ENCODE measurements at regions of chr21 and their contacts with region 1.

Region 1: GRCh38 chr21:45439161-45439872 is 34.4 kb downstream of the COL18A1 start:
- DNase-seq: peak; percentile 92
- ATAC-seq: peak; percentile 85

Region 2: GRCh38 chr21:45140346-45140940 is 298.9 kb before region 1 on chr21:
- intact Hi-C with region 1: loop called (anchors 5 kb)
- DNase-seq: no peak
- ATAC-seq: peak; percentile 89

Region 3: GRCh38 chr21:45292399-45293219 is 146.7 kb before region 1 on chr21:
- intact Hi-C with region 1: loop called (anchors 1 kb)
- DNase-seq: peak; percentile 92
- ATAC-seq: peak; percentile 76

Region 4: DNA sequence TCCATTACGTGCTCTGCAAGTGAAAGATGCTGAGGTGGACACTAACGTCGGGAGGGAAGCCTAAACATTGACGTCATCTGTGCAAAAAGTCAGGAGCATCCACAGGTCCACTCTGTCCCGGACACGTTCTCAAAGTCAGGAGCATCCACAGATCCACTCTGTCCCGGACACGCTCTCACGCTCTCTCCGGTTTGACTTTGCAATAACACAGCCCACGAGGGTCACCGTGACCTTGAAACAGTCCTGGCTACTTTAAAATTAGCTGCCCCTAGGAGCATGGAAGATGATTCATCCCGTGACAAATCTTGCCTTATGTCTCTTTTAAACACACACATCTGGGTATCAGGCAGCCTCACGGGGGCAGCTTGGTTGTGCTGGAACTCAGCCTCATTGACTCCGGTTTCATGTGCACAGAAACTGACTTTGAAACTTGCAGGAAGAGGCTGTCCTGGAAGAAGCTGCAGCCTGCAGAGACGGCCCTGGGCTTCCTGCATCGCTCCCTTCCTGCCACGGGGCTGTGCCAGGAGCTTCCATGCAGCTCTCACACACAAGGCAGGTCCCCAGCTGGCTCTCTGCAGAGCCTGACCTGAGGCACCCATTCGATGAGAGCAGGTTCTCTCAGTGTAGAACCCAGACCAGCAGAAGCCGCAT is 52.5 kb before region 1 on chr21:
- intact Hi-C with region 1: loop called (anchors 2 kb)
- DNase-seq: peak; percentile 75
- ATAC-seq: peak; percentile 51

Region 5: DNA sequence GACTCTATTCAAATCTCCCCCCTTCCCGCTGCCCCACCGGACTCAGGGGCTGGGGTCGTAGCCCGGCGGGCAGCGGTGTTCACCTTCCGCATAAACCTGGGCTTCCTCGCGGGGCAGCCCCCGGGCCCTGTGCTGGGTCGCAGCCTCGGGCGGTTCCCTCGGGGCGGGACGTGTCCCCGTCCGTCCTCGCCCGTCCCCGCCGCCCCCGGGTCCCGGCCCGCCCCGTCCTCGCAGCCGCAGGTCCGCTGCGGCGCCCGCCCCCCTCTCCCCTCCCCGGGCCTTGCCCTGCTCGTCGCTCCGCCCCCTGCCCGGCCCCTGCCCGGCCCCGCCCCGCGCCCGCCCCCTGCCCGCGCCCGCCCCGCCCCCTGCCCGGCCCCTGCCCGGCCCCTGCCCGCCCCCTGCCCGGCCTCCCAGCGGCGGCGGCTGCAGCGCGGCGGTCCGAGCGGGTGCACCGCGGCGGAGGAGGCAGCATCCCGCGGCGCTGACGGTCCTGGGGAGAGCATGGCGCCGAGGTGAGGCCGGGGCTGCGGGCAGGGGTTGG is 34.5 kb before region 1 on chr21 and contains the start of gene COL18A1:
- intact Hi-C with region 1: loop called (anchors 2 kb)
- DNase-seq: peak; percentile 80
- ATAC-seq: peak; percentile 48
- total RNA-seq, gene COL18A1: 51.6 TPM

Region 6: GRCh38 chr21:45496968-45497845 is 57.9 kb after region 1 on chr21:
- intact Hi-C with region 1: no loop called
- DNase-seq: peak; percentile 61
- ATAC-seq: no peak

Measured in Right ventricle myocardium inferior (tissue), 1 donor.